Posterior vena cava (tissue), 2 donors: ENCODE measurements at regions of chr2 and their contacts with region 1.

Region 1: GRCh38 chr2:223805008-223805407 is 32.4 kb downstream of the AP1S3 start:
- DNase-seq: no peak

Region 2: GRCh38 chr2:223734346-223734745 is 70.7 kb before region 1 on chr2:
- intact Hi-C with region 1: loop called in 1 of 2 experiments (anchors 5 kb)
- DNase-seq: no peak